B cell (primary cell): ENCODE measurements at regions of chr20 and their contacts with region 1.

Region 1: DNA sequence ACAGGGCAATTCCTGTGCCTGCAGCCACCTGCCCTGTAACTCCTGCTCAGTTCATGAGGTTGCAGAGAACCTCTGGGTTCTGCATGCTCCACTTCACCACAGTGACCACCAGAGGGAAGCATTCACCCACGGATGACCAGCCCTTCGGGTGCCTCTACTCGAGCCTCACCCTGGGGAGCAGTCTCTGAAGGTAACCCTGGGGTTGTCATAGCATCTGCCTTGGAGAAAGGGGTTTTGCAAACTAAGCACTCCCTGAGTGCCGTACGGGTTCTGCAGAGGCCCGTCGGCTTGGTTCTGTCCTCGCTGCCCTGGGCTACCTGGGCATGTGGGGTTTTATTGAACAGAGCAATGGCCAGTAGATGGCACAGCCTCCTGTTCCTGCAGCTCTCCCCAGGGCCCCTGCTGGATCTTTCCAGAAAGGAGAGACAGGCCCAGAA is 10.2 kb upstream of the CST5 start:
- DNase-seq: peak; percentile 21
- ATAC-seq: peak; percentile 31
- H3K4me3 ChIP-seq: no peak overlapping the region
- H3K4me3 Mint-ChIP-seq: no peak overlapping the region
- H3K27ac ChIP-seq: no peak overlapping the region
- H3K27ac Mint-ChIP-seq: no peak overlapping the region
- H3K4me1 ChIP-seq: no peaks in the 10 kb centered on the region
- H3K4me1 Mint-ChIP-seq: no peaks in the 10 kb centered on the region
- H3K27me3 ChIP-seq: no peaks in the 10 kb centered on the region
- H3K27me3 Mint-ChIP-seq: no peaks in the 10 kb centered on the region
- CTCF ChIP-seq: no peak

Region 2: GRCh38 chr20:23710771-23711170 is 179.0 kb before region 1 on chr20:
- CTCF ChIA-PET with region 1: no interaction called
- POLR2A ChIA-PET with region 1: no interaction called
- intact Hi-C with region 1: loop called (anchors 5 kb)
- DNase-seq: no peak
- ATAC-seq: no peak
- H3K4me3 ChIP-seq: no peak overlapping the region
- H3K4me3 Mint-ChIP-seq: no peak overlapping the region
- H3K27ac ChIP-seq: no peak overlapping the region
- H3K27ac Mint-ChIP-seq: no peak overlapping the region
- H3K4me1 ChIP-seq: no peaks in the 10 kb centered on the region
- H3K4me1 Mint-ChIP-seq: no peaks in the 10 kb centered on the region
- H3K27me3 ChIP-seq: no peaks in the 10 kb centered on the region
- H3K27me3 Mint-ChIP-seq: no peaks in the 10 kb centered on the region
- CTCF ChIP-seq: no peak

Region 3: GRCh38 chr20:23754731-23755130 is 135.1 kb before region 1 on chr20:
- CTCF ChIA-PET with region 1: no interaction called
- POLR2A ChIA-PET with region 1: no interaction called
- intact Hi-C with region 1: no loop called
- DNase-seq: no peak
- ATAC-seq: no peak
- H3K4me3 ChIP-seq: no peak overlapping the region
- H3K4me3 Mint-ChIP-seq: no peak overlapping the region
- H3K27ac ChIP-seq: no peak overlapping the region
- H3K27ac Mint-ChIP-seq: no peak overlapping the region
- H3K4me1 ChIP-seq: no peaks in the 10 kb centered on the region
- H3K4me1 Mint-ChIP-seq: no peaks in the 10 kb centered on the region
- H3K27me3 ChIP-seq: no peaks in the 10 kb centered on the region
- H3K27me3 Mint-ChIP-seq: peaks cover 10% of the 10 kb centered on the region
- CTCF ChIP-seq: no peak